ENCODE measurements at regions of chr17 and their contacts with region 1.

Region 1: GRCh38 chr17:35540589-35541404 is 3.3 kb upstream of the SLFN12L start:
- DNase-seq: no peak

Region 2: GRCh38 chr17:35161281-35161761 is 379.5 kb before region 1 on chr17:
- intact Hi-C with region 1: loop called in 1 of 2 experiments (anchors 10 kb)
- DNase-seq: peak; percentile 5

Region 3: DNA sequence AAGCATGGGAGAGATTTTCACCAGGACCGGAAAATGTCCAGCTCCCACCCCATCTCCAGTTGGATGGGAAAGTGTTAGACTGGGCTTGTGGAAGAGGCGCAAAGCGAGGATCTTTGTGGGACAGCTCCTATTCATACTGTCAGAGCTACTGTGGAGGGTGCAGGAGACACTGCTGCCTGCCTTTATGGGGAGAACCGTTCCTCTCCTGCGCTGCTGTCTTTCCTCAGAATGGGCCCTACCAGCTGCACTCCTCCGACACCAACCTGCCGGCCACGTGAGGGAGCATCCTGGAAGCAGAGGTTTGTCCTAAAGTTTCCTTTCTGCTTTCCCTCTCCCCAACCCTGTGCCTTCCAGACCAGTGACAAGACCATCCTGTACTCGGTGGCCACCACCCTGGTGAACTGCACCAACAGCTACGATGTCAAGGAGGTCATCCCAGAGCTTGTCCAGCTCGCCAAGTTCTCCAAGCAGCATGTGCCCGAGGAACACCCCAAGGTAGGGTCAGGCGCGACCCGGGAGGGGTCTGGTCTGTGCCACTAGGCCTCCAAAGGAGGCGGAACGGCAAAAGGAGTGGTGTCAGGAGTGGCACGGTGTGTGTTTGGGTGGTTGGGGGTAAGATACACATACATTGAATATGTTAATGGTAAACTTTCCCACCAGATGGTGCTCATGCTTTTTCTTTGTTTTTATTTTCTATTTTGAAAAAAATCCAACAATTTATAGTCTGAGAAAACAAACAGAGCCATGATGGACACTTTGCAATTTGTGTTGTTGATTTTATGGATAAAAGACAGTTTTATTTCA is 369.6 kb before region 1 on chr17:
- intact Hi-C with region 1: loop called (anchors 10 kb)
- DNase-seq: no peak

Region 4: DNA sequence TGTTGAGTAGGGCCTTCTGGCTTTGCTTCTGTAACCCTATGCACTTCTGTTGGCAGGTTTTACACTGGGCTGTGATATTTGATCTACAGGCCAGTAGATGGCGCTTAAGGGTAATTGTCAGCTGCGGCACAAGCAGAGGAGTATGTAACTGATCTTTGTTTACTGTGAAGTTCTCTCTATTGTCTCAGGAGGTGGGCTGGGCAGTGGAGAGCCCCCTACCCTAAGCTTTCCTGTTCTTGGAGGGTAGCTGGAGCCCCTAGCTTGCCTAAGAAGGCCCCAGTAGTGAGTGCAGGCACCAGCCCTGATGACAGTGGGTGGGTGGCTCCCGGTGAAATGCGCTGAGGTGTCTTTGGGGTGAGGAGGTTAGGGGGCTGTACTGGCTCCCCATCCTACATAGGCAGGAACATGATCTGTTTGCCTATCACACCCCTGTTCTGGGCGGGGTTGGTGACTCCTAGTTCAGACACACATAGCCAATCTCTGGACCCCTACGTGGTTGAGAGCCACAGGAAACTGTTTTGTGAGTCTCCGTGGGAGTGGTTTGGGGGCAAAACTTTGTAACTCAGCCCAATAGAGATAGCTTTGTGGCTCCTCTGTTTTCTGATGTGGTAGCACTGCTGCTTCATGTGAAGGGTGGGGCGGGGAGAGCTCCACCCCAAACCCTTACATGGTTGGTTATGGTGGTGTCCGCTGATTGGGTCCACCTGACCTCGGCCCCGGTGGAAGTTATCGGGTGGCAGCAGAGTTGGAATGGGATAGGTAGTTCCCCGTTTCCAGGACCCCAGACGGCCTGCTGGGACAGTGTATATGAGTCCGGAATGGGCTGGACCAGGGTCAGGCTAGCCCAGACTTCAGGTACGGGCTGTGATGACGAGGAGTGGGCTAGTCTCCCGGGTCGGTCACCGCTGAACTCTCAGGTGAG is 227.7 kb before region 1 on chr17:
- intact Hi-C with region 1: loop called in 1 of 2 experiments (anchors 2 kb)
- DNase-seq: peak; percentile 83

Region 5: DNA sequence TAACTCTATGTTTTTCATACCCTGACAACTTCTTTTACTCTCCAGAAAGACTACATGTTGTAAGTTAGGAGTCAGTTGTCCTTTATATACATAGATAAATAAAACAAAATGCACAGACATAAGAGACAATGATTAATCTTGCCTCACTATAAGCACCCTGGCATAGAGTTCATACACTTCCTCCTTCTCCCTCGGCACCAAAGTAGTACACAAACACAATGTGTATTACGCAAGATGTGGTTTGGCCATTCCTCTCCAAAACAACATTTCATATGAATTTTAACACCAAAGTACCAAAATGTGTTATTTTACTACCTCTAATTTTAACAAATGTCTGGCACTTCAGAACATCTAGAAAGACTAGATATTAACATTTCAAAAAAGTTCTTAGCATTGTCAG is 150.1 kb before region 1 on chr17:
- intact Hi-C with region 1: no loop called
- DNase-seq: no peak

Region 6: GRCh38 chr17:35568541-35568940 is 27.7 kb after region 1 on chr17:
- intact Hi-C with region 1: no loop called
- DNase-seq: no peak

Measured in posterior vena cava (tissue), 2 donors.